Activated CD4-positive, alpha-beta T cell treated with anti-CD3 and anti-CD28 coated beads for 36 hours (primary cell): ENCODE measurements at regions of chr1 and their contacts with region 1.

Region 1: DNA sequence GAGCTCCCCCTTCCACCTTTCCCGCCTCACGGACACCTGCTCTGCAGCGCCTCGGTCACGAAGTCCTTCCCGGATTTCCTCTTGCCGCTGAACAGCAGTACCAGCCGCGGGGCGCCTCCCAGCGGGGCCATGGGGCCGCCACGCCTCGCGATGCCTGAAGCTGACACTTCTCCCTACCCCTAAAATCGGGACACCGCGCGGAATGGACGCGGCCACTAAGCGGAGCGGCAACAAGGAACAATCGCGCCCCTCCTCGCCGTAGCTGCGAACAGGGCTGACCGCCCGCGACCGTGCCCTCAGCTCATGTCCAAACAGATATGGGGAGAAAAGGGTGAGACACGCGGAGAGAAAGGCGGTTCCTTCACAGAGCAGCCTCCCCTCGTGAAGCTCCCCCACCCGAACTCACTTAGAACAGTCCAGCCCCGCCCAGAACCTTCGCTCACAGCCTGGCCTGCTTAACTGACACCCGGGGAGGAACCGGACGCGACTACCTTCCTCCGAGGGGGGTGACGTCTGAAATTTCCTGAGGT is at the start of gene PMVK:
- DNase-seq: peak; percentile 97
- ATAC-seq: peak; percentile 80
- H3K4me3 Mint-ChIP-seq: peak within 1 kb of the TSS; percentile 95
- H3K27ac Mint-ChIP-seq: peak within 1 kb of the TSS; percentile 96
- H3K4me1 Mint-ChIP-seq: peaks cover 54% of the 10 kb centered on the region
- H3K27me3 Mint-ChIP-seq: no peaks in the 10 kb centered on the region
- total RNA-seq, gene PMVK: 17.0 to 36.9 TPM

Region 2: DNA sequence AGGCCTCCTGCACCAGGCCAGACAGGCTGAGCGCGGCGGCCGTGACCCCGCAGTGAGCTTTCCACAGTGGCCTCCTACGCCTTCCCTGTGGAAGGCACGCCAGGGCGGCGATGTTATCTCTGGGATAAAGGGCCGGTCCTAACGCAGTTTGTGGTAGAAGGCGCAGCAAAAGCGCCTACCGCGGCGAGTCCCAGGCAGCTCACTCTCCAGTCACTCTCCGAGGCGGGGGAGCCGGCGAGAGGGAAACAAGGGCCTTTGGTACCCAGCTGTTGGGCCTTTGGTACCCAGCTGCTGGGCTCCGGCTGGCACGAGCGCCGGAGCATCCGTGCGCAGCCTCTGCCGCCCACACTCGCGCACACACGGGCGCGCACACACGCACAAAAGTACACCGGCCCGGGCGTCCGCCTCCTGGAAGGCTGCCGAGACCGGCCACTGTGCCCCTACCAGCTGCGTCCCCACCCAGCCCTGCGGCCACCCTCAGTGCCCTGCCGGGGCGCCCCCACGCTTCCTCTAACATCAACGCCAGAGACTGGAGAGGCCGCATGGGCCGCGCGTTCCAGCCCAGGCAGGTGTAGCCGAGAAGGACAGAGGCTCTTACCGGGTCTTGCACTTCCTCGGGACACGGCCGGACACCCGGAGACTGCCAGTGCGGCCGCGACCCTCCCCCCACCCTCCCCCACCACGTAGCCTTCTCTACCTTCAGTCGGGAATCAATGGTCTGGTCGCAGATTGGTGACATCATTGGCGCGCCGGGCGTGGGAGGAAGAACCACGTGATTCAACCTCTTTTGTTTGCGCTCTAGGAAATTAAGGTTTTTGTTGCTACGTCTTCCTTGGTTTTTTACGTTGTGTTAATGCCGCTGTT is 309.1 kb before region 1 on chr1:
- CTCF ChIA-PET with region 1: interaction called, 4 read pairs
- POLR2A ChIA-PET with region 1: no interaction called
- intact Hi-C with region 1: loop called in 1 of 2 experiments (anchors 1 kb)
- DNase-seq: peak; percentile 96
- ATAC-seq: peak; percentile 74
- H3K4me3 Mint-ChIP-seq: peak overlapping the region; percentile 99
- H3K27ac Mint-ChIP-seq: peak overlapping the region; percentile 100
- H3K4me1 Mint-ChIP-seq: peaks cover 47% of the 10 kb centered on the region
- H3K27me3 Mint-ChIP-seq: peaks cover 1% of the 10 kb centered on the region

Region 3: DNA sequence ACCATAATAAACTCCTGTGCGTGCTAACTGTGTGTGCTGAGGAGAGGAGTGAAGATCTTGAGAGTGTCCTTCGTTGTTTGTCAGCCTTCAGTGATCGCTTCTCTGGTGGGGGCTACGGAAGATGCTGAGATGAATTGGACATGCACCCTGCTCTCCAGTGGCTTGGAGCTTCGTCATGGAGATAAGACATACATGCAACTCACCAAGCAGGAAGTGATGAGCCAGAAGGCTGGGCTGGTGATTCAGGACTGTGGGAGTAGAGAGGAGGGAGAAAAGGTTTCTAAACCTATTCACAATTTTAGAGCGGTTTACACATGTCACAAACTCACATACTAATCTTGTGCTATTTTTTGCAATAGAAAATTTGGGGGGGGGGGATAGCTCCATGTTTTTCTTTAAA is 199.8 kb before region 1 on chr1:
- CTCF ChIA-PET with region 1: no interaction called
- POLR2A ChIA-PET with region 1: interaction called, 10 read pairs
- intact Hi-C with region 1: no loop called
- DNase-seq: peak; percentile 80
- ATAC-seq: peak; percentile 97
- H3K4me3 Mint-ChIP-seq: peak overlapping the region; percentile 37
- H3K27ac Mint-ChIP-seq: peak overlapping the region; percentile 90
- H3K4me1 Mint-ChIP-seq: peaks cover 43% of the 10 kb centered on the region
- H3K27me3 Mint-ChIP-seq: no peaks in the 10 kb centered on the region

Region 4: GRCh38 chr1:154784924-154785531 is 151.6 kb before region 1 on chr1:
- CTCF ChIA-PET with region 1: no interaction called
- POLR2A ChIA-PET with region 1: no interaction called
- intact Hi-C with region 1: loop called in 1 of 2 experiments (anchors 1 kb)
- DNase-seq: peak; percentile 77
- ATAC-seq: peak; percentile 98
- H3K4me3 Mint-ChIP-seq: peak overlapping the region; percentile 35
- H3K27ac Mint-ChIP-seq: peak overlapping the region; percentile 95
- H3K4me1 Mint-ChIP-seq: peaks cover 37% of the 10 kb centered on the region
- H3K27me3 Mint-ChIP-seq: no peaks in the 10 kb centered on the region

Region 5: GRCh38 chr1:154870115-154870571 is 66.5 kb before region 1 on chr1 and contains the start of gene KCNN3:
- CTCF ChIA-PET with region 1: no interaction called
- POLR2A ChIA-PET with region 1: no interaction called
- intact Hi-C with region 1: no loop called
- DNase-seq: peak; percentile 88
- ATAC-seq: peak; percentile 97
- H3K4me3 Mint-ChIP-seq: no peak within 1 kb of the TSS
- H3K27ac Mint-ChIP-seq: no peak within 1 kb of the TSS
- H3K4me1 Mint-ChIP-seq: peaks cover 42% of the 10 kb centered on the region
- H3K27me3 Mint-ChIP-seq: peaks cover 42% of the 10 kb centered on the region
- total RNA-seq, gene KCNN3: 0.18 to 0.25 TPM

Region 6: DNA sequence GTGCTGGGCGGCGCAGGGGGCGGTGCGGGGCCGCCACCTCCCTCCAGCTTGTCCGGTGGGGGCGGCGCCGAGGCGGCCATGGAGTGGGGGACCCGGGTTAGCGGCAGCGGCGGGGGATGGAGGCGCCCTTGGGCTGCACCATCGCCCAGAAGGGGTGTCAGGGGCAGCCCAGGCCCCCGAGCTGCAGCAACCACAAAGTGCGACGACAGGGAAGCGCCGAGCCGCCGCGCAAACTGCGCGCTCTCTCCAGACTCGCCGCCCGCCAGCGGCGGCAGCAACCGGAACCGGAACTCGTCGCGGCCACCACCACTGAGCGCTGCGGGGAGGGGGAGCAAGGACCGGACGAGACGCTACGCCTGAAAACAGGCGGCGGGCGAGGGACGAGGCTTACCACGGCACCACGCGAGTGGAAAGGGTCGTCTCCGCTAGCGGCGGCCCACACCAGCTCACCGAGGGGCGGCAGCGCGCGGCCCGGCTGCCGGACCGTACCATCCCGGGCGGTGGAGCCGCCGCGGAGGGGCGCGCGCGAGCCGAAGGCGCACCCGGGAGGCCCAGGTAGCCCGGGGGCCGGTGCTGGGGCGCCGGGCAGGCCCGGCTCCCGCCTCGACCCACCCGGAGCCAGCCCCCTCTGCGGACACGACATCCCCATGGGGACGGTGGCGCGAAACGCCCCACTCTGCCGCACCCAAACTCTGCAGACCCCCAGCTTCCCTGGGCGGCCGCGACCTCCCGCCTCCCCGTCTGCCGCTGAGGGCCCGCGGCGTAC is 25.1 kb after region 1 on chr1 and contains the start of gene PYGO2:
- CTCF ChIA-PET with region 1: no interaction called
- POLR2A ChIA-PET with region 1: no interaction called
- intact Hi-C with region 1: loop called in 1 of 2 experiments (anchors 1 kb)
- DNase-seq: peak; percentile 90
- ATAC-seq: peak; percentile 81
- H3K4me3 Mint-ChIP-seq: peak within 1 kb of the TSS; percentile 91
- H3K27ac Mint-ChIP-seq: peak within 1 kb of the TSS; percentile 93
- H3K4me1 Mint-ChIP-seq: peaks cover 43% of the 10 kb centered on the region
- H3K27me3 Mint-ChIP-seq: no peaks in the 10 kb centered on the region
- total RNA-seq, gene PYGO2: 24.5 to 25.6 TPM

Region 7: DNA sequence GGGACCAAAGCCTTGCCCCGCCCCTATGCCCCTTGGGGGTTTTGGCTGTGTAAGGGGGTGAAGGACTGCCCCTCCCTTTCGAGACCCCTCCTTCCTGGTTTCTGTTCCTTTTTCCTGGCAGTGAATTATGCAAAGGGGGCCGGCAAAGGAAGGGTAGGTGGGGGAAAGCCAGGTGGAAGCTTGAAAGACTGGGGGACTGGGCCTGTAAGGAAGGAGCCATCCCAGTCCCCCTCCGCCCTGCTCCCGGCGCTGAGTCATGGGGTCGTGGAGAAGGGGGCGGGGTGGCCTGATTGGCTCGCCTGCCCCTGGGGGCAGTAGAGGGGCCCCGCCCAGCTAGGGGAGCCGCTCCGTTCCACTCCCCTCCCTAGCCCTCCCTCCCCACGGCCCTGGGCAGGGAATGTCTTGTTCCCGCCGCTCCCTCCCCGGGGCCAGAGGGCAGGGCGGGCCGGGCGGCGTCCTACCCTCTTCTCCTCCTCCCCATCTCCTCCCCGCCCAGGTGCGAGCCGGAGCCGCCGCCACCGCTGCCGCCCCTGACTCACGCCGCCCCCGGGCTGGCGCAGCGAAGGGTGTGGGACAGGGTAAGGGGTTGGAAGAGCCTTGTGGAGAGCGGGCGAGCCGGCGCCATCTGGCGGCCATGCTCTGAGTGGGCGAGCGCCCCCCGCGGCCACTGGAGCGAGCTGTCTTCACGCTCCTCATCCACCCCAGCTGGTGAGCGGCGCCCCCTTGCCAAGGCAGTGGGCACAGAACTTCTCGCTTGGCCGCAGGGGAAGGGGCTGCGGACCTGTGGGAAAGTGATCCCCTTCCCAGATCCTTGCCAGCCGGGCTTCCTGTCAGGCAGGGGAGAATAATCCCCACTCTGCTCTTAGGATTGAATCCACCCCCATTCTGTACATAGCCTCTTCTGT is 80.7 kb after region 1 on chr1:
- CTCF ChIA-PET with region 1: interaction called, 5 read pairs
- POLR2A ChIA-PET with region 1: no interaction called
- intact Hi-C with region 1: loop called in 1 of 2 experiments (anchors 1 kb)
- DNase-seq: peak; percentile 97
- ATAC-seq: peak; percentile 87
- H3K4me3 Mint-ChIP-seq: peak overlapping the region; percentile 53
- H3K27ac Mint-ChIP-seq: peak overlapping the region; percentile 69
- H3K4me1 Mint-ChIP-seq: peaks cover 69% of the 10 kb centered on the region
- H3K27me3 Mint-ChIP-seq: no peaks in the 10 kb centered on the region

Region 8: DNA sequence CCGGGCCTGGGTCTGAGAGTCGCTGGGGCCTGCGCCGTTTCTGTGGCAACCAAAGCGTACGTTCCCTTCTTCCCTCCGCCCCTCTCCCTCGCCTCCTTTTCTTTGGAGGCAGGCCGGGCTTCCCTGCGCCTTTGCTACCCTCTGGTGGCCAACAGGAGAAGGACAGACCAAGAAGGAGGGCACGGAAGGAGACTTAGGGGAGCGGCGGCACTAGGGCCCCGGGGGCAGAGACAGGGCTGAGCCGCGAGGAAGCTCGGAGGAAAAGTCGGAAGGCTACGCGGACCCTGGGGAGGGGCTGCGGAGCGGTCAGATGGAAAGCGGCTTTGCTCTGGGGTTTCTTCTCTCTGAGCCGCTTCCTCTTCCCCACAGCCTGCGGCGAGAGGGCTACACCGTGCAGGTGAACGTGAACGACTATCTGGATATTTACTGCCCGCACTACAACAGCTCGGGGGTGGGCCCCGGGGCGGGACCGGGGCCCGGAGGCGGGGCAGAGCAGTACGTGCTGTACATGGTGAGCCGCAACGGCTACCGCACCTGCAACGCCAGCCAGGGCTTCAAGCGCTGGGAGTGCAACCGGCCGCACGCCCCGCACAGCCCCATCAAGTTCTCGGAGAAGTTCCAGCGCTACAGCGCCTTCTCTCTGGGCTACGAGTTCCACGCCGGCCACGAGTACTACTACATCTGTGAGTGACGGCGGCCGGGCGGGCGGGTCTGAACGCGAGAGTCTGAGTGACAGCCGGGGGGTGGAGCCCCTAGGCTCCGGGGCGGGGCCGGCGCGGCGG is 148.3 kb after region 1 on chr1:
- CTCF ChIA-PET with region 1: interaction called, 10 read pairs
- POLR2A ChIA-PET with region 1: no interaction called
- intact Hi-C with region 1: loop called in 1 of 2 experiments (anchors 1 kb)
- DNase-seq: peak; percentile 97
- ATAC-seq: peak; percentile 78
- H3K4me3 Mint-ChIP-seq: peak overlapping the region; percentile 82
- H3K27ac Mint-ChIP-seq: peak overlapping the region; percentile 91
- H3K4me1 Mint-ChIP-seq: peaks cover 36% of the 10 kb centered on the region
- H3K27me3 Mint-ChIP-seq: peaks cover 27% of the 10 kb centered on the region

Region 9: DNA sequence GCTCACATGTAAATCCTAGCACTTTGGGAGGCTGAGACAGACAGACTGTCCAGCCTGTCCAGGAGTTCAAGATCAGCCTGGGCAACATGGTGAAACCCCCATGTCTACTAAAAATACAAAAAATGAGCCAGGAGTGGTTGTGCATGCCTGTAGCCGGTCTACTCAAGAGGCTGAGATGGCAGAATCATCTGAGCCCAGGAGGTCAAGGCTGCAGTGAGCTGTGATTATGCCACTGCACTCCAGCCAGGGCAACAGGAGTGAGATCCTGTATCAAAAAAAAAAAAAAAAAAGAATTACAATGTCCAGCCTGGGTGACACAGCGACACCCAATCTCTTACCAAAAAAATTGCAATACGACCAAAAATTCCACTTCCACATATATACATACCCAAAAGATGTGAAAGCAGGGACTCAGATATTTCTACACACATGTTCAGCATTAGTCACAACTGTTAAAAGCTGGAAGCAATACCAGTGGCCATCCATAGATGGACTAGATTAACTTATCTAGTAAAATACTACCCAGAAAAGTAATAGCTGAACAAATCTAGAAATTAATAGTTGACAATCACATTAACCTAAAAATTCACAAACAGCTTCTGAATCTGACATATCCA is 576.8 kb after region 1 on chr1:
- CTCF ChIA-PET with region 1: no interaction called
- POLR2A ChIA-PET with region 1: no interaction called
- intact Hi-C with region 1: no loop called
- DNase-seq: no peak
- ATAC-seq: no peak
- H3K4me3 Mint-ChIP-seq: no peak overlapping the region
- H3K27ac Mint-ChIP-seq: no peak overlapping the region
- H3K4me1 Mint-ChIP-seq: peaks cover 52% of the 10 kb centered on the region
- H3K27me3 Mint-ChIP-seq: no peaks in the 10 kb centered on the region